Heart right ventricle (tissue), 16 donors: ENCODE measurements at regions of chr5 and their contacts with region 1.

Region 1: GRCh38 chr5:88140856-88141752 is 127.5 kb downstream of the TMEM161B start:
- DNase-seq: peak; percentile 93 to 95
- ATAC-seq: peak; percentile 97 to 100 (median 98)
- H3K4me3 ChIP-seq: peak overlapping the region; percentile 9 to 62 (median 56)
- H3K27ac ChIP-seq: peak overlapping the region in 3 of 10 donors; percentile 8 to 47 (median 38)
- H3K4me1 ChIP-seq: peaks cover 6 to 53% (median 37%) of the 10 kb centered on the region in 9 donors
- H3K27me3 ChIP-seq: peaks cover 0 to 88% (median 67%) of the 10 kb centered on the region in 7 donors
- CTCF ChIP-seq: peak; percentile 48 to 87 (median 72)

Region 2: DNA sequence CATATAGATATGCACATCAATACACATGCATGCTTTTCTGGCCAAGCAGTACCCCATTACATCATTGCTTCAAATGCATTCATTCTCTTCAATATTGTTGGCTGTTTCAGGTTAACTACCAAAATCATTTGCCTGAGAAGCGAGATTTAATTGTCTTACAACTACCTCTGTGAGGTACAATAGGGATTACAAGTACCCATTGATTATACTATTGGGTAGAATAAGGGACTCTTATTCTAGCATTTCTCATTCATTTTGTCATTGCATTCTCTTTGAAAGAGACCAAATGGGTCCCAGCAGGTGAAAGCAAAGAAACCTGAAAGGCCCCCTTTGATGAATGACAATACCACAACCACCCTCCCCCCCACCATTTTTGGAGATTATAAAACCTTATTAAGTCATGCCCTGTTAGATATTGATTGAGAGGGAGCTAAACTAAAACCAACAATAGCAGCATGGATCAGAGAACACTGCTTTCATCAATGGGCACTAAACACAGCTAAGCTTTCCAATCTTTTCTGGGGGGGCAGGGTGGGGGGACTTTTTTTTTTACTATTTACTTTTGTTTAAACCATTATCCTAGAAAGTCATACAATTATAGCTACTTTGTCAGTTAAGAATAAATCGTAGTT is 353.4 kb before region 1 on chr5:
- intact Hi-C with region 1: loop called in 4 of 10 experiments (anchors 5 to 10 kb)
- DNase-seq: no peak
- ATAC-seq: no peak
- H3K4me3 ChIP-seq: no peak overlapping the region
- H3K27ac ChIP-seq: no peak overlapping the region
- H3K4me1 ChIP-seq: no peaks in the 10 kb centered on the region
- H3K27me3 ChIP-seq: peaks cover 0 to 93% (median 73%) of the 10 kb centered on the region in 7 donors
- CTCF ChIP-seq: no peak

Region 3: DNA sequence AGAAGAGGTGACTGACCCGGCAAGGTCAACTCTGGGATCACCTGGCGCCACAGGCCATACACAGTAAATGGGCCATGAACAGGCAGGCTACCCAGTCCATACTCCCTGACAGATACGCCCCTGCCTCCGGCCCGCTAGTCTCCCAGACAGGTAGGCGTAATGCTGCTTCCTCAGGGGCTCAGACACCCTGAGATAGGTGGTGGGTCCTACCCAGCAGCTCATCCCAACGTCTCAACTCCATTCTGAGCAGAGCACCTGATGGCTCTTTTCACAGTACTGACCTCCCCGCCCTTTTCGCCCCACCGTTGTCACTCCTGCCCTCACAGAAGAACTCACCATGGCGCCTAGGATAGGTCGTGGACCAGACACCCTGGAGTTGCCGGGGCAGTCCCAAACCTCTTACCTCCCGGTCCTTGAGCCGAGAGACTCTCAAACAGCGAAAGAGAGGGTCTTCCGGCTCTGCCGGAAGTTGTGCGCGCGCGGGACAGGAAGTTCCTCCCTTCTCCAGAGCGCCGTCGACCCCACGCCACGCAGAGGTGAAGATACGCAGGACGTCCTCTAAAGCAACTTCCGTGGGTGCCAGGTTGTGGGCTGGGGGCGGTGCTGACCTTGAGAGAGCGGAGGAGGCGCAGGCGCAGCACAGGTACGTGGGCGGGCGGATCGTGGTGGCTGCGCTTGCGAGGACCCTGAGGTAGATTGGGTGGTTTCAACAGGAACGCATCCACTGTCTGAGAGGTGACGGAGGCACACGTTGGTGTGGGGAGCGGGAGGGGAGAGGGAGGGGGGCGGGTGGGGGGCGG is 127.5 kb after region 1 on chr5 and contains the start of gene TMEM161B:
- intact Hi-C with region 1: loop called in 3 of 10 experiments (anchors 10 kb)
- DNase-seq: peak; percentile 89
- ATAC-seq: peak; percentile 99 to 100 (median 100)
- H3K4me3 ChIP-seq: peak within 1 kb of the TSS; percentile 48 to 89 (median 78)
- H3K27ac ChIP-seq: peak within 1 kb of the TSS in 9 of 10 donors; percentile 50 to 87 (median 74)
- H3K4me1 ChIP-seq: peaks cover 5 to 53% (median 38%) of the 10 kb centered on the region in 9 donors
- H3K27me3 ChIP-seq: no peaks in the 10 kb centered on the region
- CTCF ChIP-seq: no peak
- total RNA-seq, gene TMEM161B: 7.3 to 13.9 (median 8.2) TPM

Region 4: DNA sequence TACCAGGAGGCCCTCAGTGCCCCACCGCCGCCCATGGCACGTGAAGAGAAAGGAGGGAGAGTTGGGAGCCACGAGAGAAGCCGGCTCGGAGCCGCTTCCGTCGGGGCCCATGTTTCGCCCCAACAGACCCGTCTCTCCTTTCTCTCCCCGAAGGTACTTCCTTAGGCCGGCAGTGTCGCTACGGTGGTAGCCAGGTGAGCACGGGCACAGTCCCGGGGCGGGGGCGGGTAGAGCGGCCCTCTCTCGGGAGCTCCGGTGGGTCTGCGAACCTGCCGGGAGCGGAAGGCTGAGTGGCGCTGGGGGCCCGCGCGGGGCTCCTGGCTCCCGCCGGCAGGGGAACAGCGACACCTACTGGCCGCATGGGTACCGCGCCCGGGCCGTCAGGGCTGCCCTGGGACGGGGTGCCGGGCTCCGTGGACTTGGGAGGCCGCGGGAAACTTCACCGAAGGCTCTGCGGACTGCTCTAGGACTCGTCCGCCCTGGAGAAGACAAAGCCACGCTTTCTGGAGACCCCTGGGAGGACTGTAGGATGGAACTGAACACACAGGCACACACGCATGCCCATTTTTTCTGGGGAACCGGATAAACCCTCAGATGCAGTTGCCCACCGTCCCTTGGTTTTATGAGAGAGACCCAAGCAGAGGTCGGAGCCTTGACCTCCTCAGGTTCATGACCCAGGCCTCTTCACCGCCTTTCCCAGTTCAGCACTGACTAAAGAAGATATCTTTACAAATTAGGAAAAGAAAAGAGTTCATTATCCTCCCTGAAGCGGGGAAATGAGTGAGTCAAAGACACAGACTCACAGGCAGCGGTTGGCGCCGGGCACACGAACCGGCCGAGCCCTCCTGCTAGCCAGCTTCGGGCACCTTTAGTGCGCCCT is 539.4 kb after region 1 on chr5:
- intact Hi-C with region 1: loop called in 7 of 10 experiments (anchors 5 kb)
- DNase-seq: peak; percentile 57 to 77
- ATAC-seq: peak; percentile 87 to 95 (median 92)
- H3K4me3 ChIP-seq: peak overlapping the region in 9 of 10 donors; percentile 18 to 52 (median 41)
- H3K27ac ChIP-seq: no peak overlapping the region
- H3K4me1 ChIP-seq: peaks cover 3 to 31% (median 18%) of the 10 kb centered on the region in 9 donors
- H3K27me3 ChIP-seq: peaks cover 50 to 100% (median 99%) of the 10 kb centered on the region in 7 donors
- CTCF ChIP-seq: peak; percentile 86 to 99 (median 96)